Dorsolateral prefrontal cortex (tissue), 120 donors: ENCODE measurements at regions of chr9 and their contacts with region 1.

Region 1: GRCh38 chr9:613771-614347 is 227.6 kb upstream of the DMRT1 start:
- DNase-seq: peak; percentile 61 to 88 (median 84)
- H3K4me3 ChIP-seq: peak overlapping the region in 17 of 59 donors; percentile 1 to 29 (median 19)
- H3K27ac ChIP-seq: peak overlapping the region in 57 of 59 donors; percentile 8 to 89 (median 75)
- H3K27me3 ChIP-seq: no peaks in the 10 kb centered on the region
- CTCF ChIP-seq: peak in 55 of 56 donors; percentile 77 to 100 (median 96)

Region 2: DNA sequence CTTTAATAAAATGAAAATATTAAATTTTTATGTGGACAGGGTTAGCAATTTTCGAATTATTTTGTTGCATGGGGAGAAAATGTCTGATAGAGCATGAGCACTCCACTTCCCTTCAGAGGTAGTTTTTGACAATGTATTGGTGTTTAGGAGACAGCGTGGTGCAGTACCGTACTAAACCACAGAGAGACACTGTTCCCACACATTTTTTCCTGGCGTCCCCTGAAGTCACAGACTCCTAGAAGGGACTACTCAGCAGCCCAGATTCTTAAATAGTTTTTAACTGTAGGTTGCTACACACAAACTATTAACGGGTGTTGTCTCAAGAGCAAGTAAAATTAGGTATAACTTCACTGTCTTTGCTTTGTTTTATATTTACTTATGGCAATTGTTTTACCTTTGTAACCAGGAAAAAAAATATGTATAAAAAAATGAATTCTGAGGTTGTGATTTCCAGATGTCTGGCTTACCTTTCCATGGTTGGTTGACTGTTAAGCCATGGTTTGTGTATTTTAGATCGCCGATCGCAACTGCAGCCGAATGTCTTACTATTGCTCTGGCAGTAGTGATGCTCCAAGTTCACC is 228.0 kb before region 1 on chr9:
- intact Hi-C with region 1: loop called (anchors 5 to 10 kb)
- DNase-seq: peak in 7 of 10 donors; percentile 28 to 65 (median 52)
- H3K4me3 ChIP-seq: no peak overlapping the region
- H3K27ac ChIP-seq: no peak overlapping the region
- H3K27me3 ChIP-seq: peaks cover 0 to 4% (median 0%) of the 10 kb centered on the region in 45 donors
- CTCF ChIP-seq: peak; percentile 59 to 97 (median 88)

Region 3: GRCh38 chr9:693201-694091 is 79.6 kb after region 1 on chr9:
- intact Hi-C with region 1: loop called in 1 of 2 experiments (anchors 1 kb)
- DNase-seq: peak in 2 of 10 donors; percentile 58 to 74
- H3K4me3 ChIP-seq: peak overlapping the region; percentile 12 to 74 (median 50)
- H3K27ac ChIP-seq: peak overlapping the region; percentile 84 to 99 (median 97)
- H3K27me3 ChIP-seq: no peaks in the 10 kb centered on the region
- CTCF ChIP-seq: peak in 21 of 56 donors; percentile 5 to 33 (median 18)

Region 4: DNA sequence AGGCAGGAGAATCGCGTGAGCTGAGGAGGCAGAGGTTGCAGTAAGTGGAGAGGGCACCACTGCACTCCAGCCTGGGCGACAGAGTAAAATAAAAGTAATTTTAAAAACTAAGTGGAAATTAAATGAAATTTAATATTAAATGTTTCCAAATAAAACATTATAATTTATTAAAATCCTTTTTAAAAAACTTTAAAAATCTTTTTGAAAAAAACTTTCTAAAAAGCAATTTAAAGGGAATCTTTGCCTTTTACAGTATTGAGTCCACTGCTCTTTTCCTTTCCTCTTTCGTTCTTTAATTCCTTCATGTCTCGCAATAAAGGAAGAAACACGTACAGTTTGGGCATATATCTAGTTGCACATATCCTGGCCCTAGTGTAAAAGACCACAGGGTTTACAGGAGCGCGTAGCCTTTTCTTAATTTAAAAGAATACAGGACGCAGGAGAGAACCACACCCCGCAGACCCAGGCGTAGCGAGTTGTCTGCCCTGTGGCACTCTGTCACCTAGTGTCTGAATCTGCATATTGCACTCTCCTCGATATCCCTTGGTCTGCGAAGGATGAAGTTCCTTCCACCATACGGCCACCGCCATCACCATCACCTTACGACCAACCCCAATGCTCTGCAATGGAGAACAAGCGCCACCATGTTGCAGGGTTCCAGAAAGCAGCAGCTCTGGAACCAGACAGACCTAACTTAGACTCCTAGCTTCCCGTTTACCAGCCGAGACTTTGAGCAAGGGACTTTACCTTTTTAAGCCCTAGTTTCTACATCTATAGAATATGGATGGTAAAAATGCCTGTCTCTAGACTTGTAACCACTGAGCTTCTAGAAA is 150.0 kb after region 1 on chr9:
- intact Hi-C with region 1: loop called in 1 of 2 experiments (anchors 2 kb)
- DNase-seq: peak in 7 of 10 donors; percentile 43 to 76 (median 50)
- H3K4me3 ChIP-seq: peak overlapping the region in 19 of 59 donors; percentile 4 to 45 (median 17)
- H3K27ac ChIP-seq: no peak overlapping the region
- H3K27me3 ChIP-seq: peaks cover 0 to 10% (median 0%) of the 10 kb centered on the region in 45 donors
- CTCF ChIP-seq: peak in 55 of 56 donors; percentile 36 to 93 (median 79)

Region 5: GRCh38 chr9:1009101-1009707 is 395.3 kb after region 1 on chr9:
- intact Hi-C with region 1: loop called (anchors 5 to 10 kb)
- DNase-seq: peak; percentile 48 to 91 (median 84)
- H3K4me3 ChIP-seq: peak overlapping the region in 4 of 59 donors; percentile 1 to 30 (median 17)
- H3K27ac ChIP-seq: no peak overlapping the region
- H3K27me3 ChIP-seq: peaks cover 0 to 18% (median 0%) of the 10 kb centered on the region in 45 donors
- CTCF ChIP-seq: peak; percentile 76 to 100 (median 97)

Region 6: DNA sequence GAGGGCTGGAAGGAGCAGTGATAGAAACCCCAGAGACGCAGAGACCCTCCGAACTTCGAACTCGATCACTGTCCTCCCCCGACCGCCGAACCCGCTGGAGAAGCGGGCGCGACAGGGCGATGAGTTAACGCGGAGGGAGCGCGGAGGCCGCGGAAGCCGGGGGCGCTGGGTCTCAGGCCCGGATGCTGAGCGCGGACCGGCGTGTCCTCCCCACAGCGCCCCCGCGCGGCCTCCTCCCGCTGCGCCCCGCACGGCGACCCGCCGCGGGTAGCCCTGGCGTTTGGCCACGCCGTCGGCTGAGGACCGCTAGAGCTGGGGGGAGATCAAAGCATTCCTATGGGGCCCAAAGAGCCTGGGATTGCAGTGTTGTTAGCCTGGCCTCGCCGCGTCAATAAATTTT is 428.6 kb after region 1 on chr9:
- intact Hi-C with region 1: no loop called
- DNase-seq: peak in 1 of 10 donors; percentile 69
- H3K4me3 ChIP-seq: peak overlapping the region in 54 of 59 donors; percentile 5 to 66 (median 43)
- H3K27ac ChIP-seq: peak overlapping the region in 1 of 59 donors; percentile 21
- H3K27me3 ChIP-seq: peaks cover 4 to 100% (median 89%) of the 10 kb centered on the region in 45 donors
- CTCF ChIP-seq: peak in 53 of 56 donors; percentile 13 to 74 (median 50)